Activated CD4-positive, alpha-beta memory T cell treated with anti-CD3 and anti-CD28 coated beads, Interleukin-2, amount 10 ng/mL, durations not matched to agents 7 days and 5 days (primary cell): ENCODE measurements at regions of chr19 and their contacts with region 1.

Region 1: GRCh38 chr19:20923077-20923871 is at the start of gene ZNF85:
- DNase-seq: peak; percentile 94
- H3K4me3 Mint-ChIP-seq: peak within 1 kb of the TSS; percentile 94
- H3K27ac Mint-ChIP-seq: peak within 1 kb of the TSS; percentile 94
- H3K4me1 Mint-ChIP-seq: peaks cover 19% of the 10 kb centered on the region
- H3K27me3 Mint-ChIP-seq: no peaks in the 10 kb centered on the region
- total RNA-seq, gene ZNF85: 16.4 to 17.2 TPM

Region 2: DNA sequence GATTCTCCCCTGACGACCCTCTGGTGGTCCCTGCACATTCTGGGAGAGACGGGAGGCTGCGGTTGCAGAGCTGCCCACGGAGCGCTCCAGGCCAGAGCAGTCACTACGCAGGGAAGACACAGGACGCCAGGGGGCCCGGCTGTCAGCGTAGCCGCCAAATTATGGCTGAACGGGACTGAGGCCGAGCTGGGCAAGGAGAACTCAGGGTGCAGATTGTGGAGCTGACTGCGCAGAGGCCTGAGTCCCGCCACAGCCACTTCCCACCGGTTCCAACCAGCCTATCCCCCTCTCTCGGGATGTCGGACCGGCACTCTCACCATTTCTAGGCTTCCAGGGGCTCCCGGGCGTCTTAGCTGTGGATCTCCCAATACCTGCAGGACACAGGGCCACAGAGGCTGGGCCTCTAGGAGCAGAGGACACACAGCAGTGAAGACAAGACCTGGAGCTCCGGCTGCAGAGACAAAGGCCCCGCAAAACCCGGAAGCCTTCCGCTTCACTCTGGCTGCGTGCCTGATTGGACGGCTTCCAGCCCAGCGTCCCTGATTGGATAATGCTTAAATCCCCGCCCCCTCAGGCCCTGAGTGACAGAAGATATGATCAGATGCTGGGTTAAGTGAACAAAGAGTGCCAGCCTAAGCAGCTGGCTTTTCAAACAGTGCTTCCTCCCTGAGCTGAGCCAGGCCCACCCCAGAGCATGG is 357.8 kb before region 1 on chr19 and contains the start of gene ZNF737:
- CTCF ChIA-PET with region 1: interaction called, 3 read pairs
- POLR2A ChIA-PET with region 1: interaction called, 12 read pairs
- DNase-seq: peak; percentile 91
- H3K4me3 Mint-ChIP-seq: peak within 1 kb of the TSS; percentile 98
- H3K27ac Mint-ChIP-seq: peak within 1 kb of the TSS; percentile 93
- H3K4me1 Mint-ChIP-seq: peaks cover 20% of the 10 kb centered on the region
- H3K27me3 Mint-ChIP-seq: no peaks in the 10 kb centered on the region
- total RNA-seq, gene ZNF737: 10.4 to 11.7 TPM

Region 3: DNA sequence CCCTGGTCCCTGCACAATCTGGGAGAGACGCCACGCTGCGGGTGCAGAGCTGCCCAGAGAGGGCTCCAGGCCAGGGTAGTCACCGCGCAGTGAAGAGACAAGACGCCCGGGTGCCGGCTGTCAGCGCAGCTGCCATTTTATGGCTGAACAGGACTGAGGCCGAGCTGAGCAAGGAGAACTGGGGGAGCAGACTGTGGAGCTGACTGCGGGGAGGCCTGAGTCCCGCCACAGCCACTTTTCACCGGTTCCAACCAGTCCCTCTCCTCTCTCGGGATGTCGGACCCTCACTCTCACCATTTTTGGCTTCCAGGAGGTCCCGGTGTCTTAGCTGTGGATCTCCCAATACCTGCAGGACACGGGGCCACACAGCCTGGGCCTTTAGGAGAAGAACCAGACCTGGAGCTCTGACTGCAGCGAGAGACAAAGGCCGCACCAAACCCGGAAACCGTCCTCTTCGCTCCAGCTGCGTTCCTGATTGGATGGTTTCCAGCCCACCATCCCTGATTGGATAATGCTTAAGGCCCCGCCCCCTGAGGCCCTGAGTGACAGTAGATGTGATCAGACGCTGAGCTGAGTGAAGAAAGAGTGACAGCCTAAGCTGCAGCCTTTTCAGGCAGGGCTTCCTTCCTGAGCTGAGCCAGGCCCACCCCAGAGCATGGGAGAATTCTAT is 262.0 kb before region 1 on chr19 and contains the start of gene ZNF626:
- CTCF ChIA-PET with region 1: no interaction called
- POLR2A ChIA-PET with region 1: interaction called, 15 read pairs
- DNase-seq: peak; percentile 92
- H3K4me3 Mint-ChIP-seq: peak within 1 kb of the TSS; percentile 88
- H3K27ac Mint-ChIP-seq: peak within 1 kb of the TSS; percentile 84
- H3K4me1 Mint-ChIP-seq: peaks cover 23% of the 10 kb centered on the region
- H3K27me3 Mint-ChIP-seq: no peaks in the 10 kb centered on the region
- total RNA-seq, gene ZNF626: 7.6 to 8.5 TPM

Region 4: DNA sequence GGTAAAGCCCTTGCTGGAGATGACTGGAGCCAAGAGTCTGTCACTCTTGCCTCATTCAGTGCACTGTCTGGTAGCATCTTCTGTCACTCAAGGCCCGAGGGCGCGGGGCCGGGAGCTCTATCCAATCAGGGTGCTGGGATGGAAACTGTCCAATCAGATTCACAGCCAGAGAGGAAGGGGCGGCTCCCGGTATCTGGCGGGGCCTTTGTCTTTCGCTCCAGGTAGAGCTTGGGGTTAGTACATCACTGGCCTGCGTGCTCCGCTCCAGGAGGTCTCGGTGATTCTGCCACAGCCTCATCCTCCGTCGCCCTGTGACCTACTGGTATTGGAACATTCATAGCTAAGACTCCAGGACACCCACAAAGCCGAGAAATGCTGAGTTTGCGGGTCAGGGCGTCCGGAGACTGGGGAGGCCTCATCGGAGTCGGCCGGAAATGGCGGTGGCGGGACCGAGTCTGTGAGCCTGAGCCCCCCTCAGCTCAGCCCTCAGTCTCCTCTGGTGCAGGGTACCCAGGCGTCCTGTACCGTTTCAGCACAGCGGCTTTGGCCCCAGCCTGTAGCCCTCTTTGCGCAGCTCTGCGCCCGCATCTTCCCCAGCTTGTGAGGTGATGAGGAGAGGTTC is 76.6 kb after region 1 on chr19:
- CTCF ChIA-PET with region 1: no interaction called
- POLR2A ChIA-PET with region 1: interaction called, 23 read pairs
- DNase-seq: peak; percentile 88
- H3K4me3 Mint-ChIP-seq: peak overlapping the region; percentile 85
- H3K27ac Mint-ChIP-seq: peak overlapping the region; percentile 79
- H3K4me1 Mint-ChIP-seq: peaks cover 20% of the 10 kb centered on the region
- H3K27me3 Mint-ChIP-seq: no peaks in the 10 kb centered on the region

Region 5: GRCh38 chr19:21082011-21082975 is 159.0 kb after region 1 on chr19 and contains the start of gene ZNF714:
- CTCF ChIA-PET with region 1: no interaction called
- POLR2A ChIA-PET with region 1: interaction called, 21 read pairs
- DNase-seq: peak; percentile 91
- H3K4me3 Mint-ChIP-seq: peak within 1 kb of the TSS; percentile 99
- H3K27ac Mint-ChIP-seq: peak within 1 kb of the TSS; percentile 98
- H3K4me1 Mint-ChIP-seq: peaks cover 34% of the 10 kb centered on the region
- H3K27me3 Mint-ChIP-seq: no peaks in the 10 kb centered on the region
- total RNA-seq, gene ZNF714: 20.4 to 23.7 TPM

Region 6: DNA sequence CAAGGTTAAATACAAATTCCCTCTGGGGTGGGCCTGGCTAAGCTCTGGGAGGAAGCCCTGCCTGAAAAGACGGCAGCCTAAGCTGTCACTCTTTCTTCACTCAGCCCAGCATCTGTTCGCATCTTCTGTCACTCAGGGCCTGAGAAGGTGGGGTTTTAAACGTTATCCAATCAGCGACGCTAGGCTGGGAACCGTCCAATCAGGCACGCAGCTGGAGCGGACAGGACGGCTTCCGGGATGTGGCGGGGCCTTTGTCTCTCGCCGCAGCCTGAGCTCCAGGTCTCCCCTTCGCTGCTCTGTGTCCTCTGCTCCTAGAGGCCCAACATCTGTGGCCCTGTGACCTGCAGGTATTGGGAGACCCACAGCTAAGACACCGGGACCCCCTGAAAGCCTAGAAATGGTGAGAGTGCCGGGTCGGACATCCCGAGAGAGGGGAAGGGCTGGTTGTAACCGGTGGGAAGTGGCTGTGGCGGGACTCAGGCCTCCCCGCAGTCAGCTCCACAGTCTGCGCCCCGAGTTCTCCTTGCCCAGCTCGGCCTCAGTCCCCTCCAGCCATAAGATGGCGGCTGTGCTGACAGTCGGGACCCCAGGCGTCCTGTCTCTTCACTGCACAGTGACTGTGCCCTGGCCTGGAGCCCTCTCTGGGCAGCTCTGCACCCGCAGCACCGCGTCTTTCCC is 218.7 kb after region 1 on chr19 and contains the start of gene ZNF431:
- CTCF ChIA-PET with region 1: no interaction called
- POLR2A ChIA-PET with region 1: interaction called, 19 read pairs
- DNase-seq: peak; percentile 93
- H3K4me3 Mint-ChIP-seq: peak within 1 kb of the TSS; percentile 96
- H3K27ac Mint-ChIP-seq: peak within 1 kb of the TSS; percentile 91
- H3K4me1 Mint-ChIP-seq: peaks cover 22% of the 10 kb centered on the region
- H3K27me3 Mint-ChIP-seq: no peaks in the 10 kb centered on the region
- total RNA-seq, gene ZNF431: 16.1 to 20.5 TPM